Mammary epithelial cell (primary cell): ENCODE measurements at regions of chr1 and their contacts with region 1.

Region 1: DNA sequence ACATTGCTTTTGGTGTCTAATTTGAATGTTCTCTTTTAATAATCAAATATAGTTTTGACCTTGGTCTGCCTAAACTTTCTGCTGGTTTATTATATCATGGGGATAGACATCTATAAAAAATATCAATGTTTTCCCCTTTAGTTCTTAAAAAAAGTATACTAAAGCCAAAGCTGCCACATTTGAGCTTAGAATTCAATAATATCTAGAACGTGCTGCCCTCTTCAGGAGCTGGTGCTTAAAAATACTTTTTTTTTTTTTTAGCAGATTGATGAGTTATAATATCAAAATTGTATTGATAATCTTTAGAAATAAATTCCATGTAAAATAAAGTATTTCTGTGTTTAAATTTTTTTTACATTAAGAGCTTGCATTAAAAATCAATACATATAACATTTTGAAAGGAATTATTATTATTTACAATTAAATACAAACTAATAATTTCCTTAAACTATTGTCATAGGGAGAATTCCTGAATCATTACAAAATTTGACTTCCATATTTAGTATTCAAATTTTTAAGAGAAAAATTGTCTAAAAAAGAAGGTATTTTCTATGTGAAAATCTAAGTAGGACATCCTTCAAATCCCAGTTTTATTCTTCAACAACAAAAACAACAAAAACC is 40.1 kb upstream of the ADGRL2 start:
- DNase-seq: no peak
- H3K4me3 ChIP-seq: no peak overlapping the region
- H3K27ac ChIP-seq: no peak overlapping the region
- H3K4me1 ChIP-seq: no peaks in the 10 kb centered on the region
- H3K27me3 ChIP-seq: no peaks in the 10 kb centered on the region
- CTCF ChIP-seq: peak; percentile 23 to 50

Region 2: GRCh38 chr1:81305997-81306452 is 454.6 kb before region 1 on chr1:
- CTCF ChIA-PET with region 1: no interaction called
- dilution Hi-C with region 1: no loop called
- in situ Hi-C with region 1: no loop called
- intact Hi-C with region 1: loop called (anchors 5 kb)
- DNase-seq: peak; percentile 36
- H3K4me3 ChIP-seq: peak overlapping the region; percentile 40 to 54 (median 46)
- H3K27ac ChIP-seq: no peak overlapping the region
- H3K4me1 ChIP-seq: peaks cover 5% of the 10 kb centered on the region
- H3K27me3 ChIP-seq: no peaks in the 10 kb centered on the region
- CTCF ChIP-seq: peak in 1 of 2 donors; percentile 55

Region 3: DNA sequence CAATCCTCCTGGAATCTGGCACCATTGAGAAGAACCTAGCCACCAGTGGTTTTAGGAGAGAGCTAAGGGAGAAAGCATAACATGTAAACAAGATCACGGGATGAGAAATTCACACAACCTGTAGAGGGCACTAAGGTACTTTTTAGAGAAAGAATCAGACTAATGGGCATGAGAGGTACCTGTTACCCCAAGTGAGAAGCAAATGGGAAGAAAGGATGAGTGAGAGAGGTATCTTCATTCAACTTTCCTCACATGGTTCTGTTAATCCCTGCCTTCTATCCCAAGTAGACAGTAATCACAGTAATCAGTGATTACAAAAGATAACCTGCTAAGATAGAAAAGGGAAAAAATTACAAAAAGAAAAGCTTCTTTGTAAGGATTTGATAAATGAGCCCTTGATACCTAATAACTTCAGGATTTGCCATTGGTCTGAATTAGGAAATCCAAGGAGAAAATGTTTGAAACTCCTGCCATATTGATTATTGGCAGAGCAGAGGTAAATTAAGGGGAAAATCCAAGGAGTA is 210.9 kb before region 1 on chr1:
- CTCF ChIA-PET with region 1: interaction called, 7 read pairs
- dilution Hi-C with region 1: no loop called
- in situ Hi-C with region 1: loop called in 1 of 2 experiments (anchors 25 kb)
- intact Hi-C with region 1: loop called (anchors 2 kb)
- DNase-seq: peak; percentile 40
- H3K4me3 ChIP-seq: no peak overlapping the region
- H3K27ac ChIP-seq: no peak overlapping the region
- H3K4me1 ChIP-seq: peaks cover 8% of the 10 kb centered on the region
- H3K27me3 ChIP-seq: no peaks in the 10 kb centered on the region
- CTCF ChIP-seq: peak; percentile 50 to 68

Region 4: GRCh38 chr1:81800695-81801650 is 40.4 kb after region 1 on chr1 and contains the start of gene ADGRL2:
- CTCF ChIA-PET with region 1: no interaction called
- dilution Hi-C with region 1: no loop called
- in situ Hi-C with region 1: no loop called
- intact Hi-C with region 1: no loop called
- DNase-seq: peak; percentile 91
- H3K4me3 ChIP-seq: peak within 1 kb of the TSS; percentile 80 to 94 (median 85)
- H3K27ac ChIP-seq: peak within 1 kb of the TSS; percentile 81
- H3K4me1 ChIP-seq: no peaks in the 10 kb centered on the region
- H3K27me3 ChIP-seq: no peaks in the 10 kb centered on the region
- CTCF ChIP-seq: no peak
- total RNA-seq, gene ADGRL2: 43.7 to 105 TPM